ENCODE measurements at regions of chr17 and their contacts with region 1.

Region 1: DNA sequence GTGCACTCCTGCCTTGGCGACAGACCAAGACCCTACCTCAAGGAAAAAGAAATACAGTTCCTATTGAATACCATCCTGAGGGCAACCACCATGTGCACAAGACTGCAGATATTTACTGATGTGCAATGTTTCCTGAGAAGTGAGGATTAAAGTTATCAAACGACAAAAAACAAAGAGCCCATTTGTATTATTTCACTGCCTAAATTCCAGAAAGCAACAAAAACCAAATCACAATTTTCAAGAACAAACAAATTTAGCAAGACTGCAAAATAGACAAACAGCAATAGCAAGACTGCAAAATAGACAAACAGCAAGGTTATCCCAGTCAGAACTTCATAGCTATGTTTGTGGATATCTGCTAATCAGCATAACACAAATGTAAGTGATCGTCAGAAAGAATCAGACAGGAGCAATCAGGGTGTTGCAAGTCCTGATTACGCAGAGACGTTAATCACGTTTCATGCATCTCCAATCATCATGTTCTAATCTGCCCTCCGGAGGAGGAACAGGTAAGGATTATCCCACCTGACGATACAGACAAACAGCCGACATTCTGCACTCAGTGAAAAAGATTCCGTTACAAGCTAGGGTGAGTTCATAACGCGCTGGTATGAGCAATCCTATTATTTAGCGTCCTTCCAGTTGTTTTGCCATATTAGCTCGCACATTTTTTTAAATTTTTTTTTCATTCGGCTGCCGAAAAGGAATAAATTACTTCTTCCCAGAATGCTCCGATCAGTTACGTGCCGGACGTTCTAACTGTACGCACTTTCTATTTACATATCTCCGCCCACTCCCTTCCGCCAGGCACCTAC is 2.9 kb downstream of the TMEM107 start:
- DNase-seq: peak; percentile 89 to 100
- ATAC-seq: peak; percentile 77 to 85
- H3K4me3 ChIP-seq: peak overlapping the region; percentile 41
- H3K27ac ChIP-seq: peak overlapping the region; percentile 86 to 88
- H3K4me1 ChIP-seq: peaks cover 34% of the 10 kb centered on the region
- CTCF ChIP-seq: 0 out of 3 replicates have a peak, but pooled peaks have one; percentile 9
- EP300 ChIP-seq: peak; percentile 12 to 44; a peak in 1 of 5 replicates
- POLR2A ChIP-seq: peak; percentile 100
- RAD21 ChIP-seq: peak in 1 of 2 experiments; percentile 23; a peak in 1 of 5 replicates

Region 2: GRCh38 chr17:8125157-8125946 is 47.9 kb before region 1 on chr17:
- CTCF ChIA-PET with region 1: interaction called, 4 read pairs
- POLR2A ChIA-PET with region 1: interaction called, 41 read pairs
- DNase-seq: peak; percentile 81 to 84
- ATAC-seq: peak in 1 of 2 experiments; percentile 18; a peak in 3 of 6 replicates
- H3K4me3 ChIP-seq: peak overlapping the region; percentile 56
- H3K27ac ChIP-seq: peak overlapping the region; percentile 73 to 86
- H3K4me1 ChIP-seq: peaks cover 19% of the 10 kb centered on the region
- CTCF ChIP-seq: no peak
- EP300 ChIP-seq: no peak; a peak in 1 of 5 replicates
- POLR2A ChIP-seq: no peak
- RAD21 ChIP-seq: 0 out of 5 replicates have a peak, but pooled peaks of 1 of the 2 experiments have one; percentile 5

Region 3: DNA sequence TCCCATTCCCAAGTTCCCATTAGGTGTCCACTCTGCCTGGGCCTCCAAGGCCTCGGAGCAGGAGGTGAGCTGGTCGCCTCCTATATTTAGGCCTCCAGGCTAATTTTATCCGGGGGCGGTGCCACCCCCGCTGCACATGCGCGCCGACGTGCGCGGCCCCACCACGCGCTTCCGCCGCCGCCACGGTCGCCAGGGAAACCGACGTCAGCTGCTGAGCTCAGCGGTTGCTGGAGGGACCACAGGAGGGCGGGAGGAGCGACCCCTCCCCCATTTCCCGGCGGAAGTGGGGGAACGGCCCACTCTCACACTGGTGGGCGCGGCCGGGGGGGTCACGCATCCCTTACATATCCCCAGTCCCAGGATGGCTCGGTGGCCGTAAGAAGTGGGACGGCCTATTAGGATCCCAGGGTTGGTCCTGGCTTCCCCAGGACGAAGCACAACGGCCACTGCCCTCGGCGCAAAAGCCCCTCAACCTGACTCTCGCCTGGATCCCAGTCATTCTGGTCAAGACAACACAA is 22.1 kb before region 1 on chr17:
- CTCF ChIA-PET with region 1: interaction called, 8 read pairs
- POLR2A ChIA-PET with region 1: interaction called, 43 read pairs
- DNase-seq: no peak
- ATAC-seq: no peak
- H3K4me3 ChIP-seq: peak overlapping the region; percentile 49; the same call in 2 of the 3 replicates
- H3K27ac ChIP-seq: peak overlapping the region; percentile 89 to 93; a peak in 3 of 6 replicates
- H3K4me1 ChIP-seq: peaks cover 42% of the 10 kb centered on the region
- CTCF ChIP-seq: no peak
- EP300 ChIP-seq: no peak
- POLR2A ChIP-seq: no peak
- RAD21 ChIP-seq: no peak

Region 4: DNA sequence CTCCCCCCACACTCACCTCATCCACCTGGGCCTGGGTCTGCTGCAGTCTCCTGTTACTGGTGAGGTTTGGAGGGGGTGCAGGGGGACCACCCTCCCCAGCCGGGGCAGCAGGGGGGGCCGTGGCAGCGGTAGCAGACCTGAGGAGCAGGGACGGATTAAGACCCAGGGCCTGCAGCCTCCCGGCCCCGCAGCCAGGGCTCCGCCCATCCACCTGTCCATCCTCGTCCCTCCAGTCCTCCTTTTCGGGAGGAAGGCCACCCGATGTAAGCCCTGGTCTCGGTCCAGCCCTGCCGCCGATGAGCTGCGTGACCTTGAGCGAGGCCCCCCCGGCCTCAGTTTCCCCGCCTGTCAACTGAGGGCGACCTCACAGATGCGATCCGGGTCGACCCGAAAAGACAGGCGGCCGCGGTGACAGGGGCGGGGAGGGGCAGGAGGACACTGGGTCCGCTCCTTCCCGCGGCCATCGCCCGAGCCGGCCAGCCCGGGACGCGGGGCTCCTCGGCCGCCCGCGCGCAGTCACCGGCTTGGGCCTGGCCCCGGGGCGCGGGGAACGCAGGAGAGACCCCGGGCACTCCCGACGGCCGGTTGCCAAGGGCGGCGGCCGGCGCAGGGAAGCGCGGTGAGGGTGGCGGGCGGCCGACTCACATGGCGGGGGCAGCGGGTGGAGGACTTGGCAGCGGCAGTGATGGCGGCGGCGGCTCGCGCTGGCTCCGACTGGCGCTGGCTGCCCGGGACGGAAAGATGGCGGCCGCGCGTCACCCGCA is 10.8 kb before region 1 on chr17 and contains the start of gene VAMP2:
- CTCF ChIA-PET with region 1: interaction called, 16 read pairs
- POLR2A ChIA-PET with region 1: interaction called, 22 read pairs
- DNase-seq: peak; percentile 56 to 74
- ATAC-seq: peak; percentile 52 to 67
- H3K4me3 ChIP-seq: peak within 1 kb of the TSS; percentile 65
- H3K27ac ChIP-seq: peak within 1 kb of the TSS; percentile 92 to 98
- H3K4me1 ChIP-seq: peaks cover 38% of the 10 kb centered on the region
- CTCF ChIP-seq: no peak
- EP300 ChIP-seq: no peak
- POLR2A ChIP-seq: peak; percentile 89
- RAD21 ChIP-seq: no peak
- polyA plus RNA-seq, gene VAMP2: 21.7 and 24.7 TPM in 2 replicates

Region 5: DNA sequence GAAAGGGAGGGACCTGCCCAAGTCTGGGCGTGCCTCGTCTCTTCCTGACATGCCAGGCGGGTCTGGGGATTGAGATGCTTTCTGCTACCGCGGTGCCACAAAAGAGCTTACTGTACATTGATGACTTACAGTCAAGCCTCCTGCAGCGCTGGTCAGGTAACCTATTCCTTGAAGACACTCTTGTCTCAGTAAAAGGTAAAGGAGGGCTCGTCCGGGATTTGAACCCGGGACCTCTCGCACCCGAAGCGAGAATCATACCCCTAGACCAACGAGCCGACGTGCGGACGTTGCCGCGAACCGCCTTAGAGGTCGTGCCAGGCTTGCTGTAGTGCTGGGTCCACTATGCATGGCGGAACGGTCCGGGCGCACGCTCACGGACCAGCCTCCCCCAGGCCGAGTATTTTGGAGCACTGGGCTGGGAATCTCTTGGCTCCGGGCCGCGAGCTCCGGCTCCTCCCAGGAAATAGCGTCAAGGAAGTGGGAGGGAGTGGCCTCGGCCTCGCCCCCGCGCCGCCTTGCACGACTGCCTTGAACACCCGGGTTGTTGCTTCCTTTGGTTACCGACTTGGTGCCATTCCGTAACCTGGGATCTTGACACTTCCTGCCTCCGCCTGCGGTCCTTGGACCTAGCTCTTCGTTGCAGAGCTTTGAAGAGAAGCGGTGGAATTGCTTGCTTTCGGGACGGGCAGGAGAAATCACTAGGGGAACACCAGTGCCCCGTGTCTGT is 49.5 kb after region 1 on chr17:
- CTCF ChIA-PET with region 1: interaction called, 5 read pairs
- POLR2A ChIA-PET with region 1: interaction called, 34 read pairs
- DNase-seq: peak; percentile 85 to 98
- ATAC-seq: peak; percentile 38 to 64
- H3K4me3 ChIP-seq: peak overlapping the region; percentile 78
- H3K27ac ChIP-seq: peak overlapping the region; percentile 95 to 97
- H3K4me1 ChIP-seq: peaks cover 32% of the 10 kb centered on the region
- CTCF ChIP-seq: no peak
- EP300 ChIP-seq: no peak
- POLR2A ChIP-seq: peak; percentile 85
- RAD21 ChIP-seq: no peak

Region 6: DNA sequence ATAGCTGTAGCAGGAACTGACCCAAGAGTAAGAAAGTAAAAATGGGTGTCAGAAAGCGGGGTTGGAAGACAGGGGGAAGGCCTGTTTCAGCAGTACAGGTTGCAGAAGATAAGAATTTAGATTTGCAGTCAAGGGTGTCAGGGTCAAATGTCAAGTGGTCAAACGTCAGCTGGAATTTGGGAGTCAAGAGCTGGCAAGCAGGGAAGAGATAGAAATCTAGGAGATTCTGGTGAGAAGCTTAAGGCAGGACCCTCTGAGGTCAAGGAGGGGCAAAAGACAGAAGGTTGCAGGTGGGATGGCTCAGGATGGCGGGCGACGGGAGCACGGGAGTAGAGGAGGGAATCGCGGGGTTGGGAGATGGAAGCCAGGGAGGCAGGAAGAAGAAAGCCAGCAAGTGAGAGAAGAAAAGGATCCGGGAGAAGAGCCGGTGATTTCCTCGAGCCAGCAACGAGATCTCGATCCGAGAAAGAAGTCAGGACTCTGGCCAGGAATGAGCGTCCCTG is 121.6 kb after region 1 on chr17:
- CTCF ChIA-PET with region 1: no interaction called
- POLR2A ChIA-PET with region 1: interaction called, 10 read pairs
- DNase-seq: no peak
- ATAC-seq: peak; percentile 48
- H3K4me3 ChIP-seq: peak overlapping the region; percentile 48
- H3K27ac ChIP-seq: peak overlapping the region; percentile 89 to 93
- H3K4me1 ChIP-seq: peaks cover 16% of the 10 kb centered on the region
- CTCF ChIP-seq: no peak
- EP300 ChIP-seq: no peak
- POLR2A ChIP-seq: no peak
- RAD21 ChIP-seq: no peak